ENCODE measurements at regions of chr11 and their contacts with region 1.

Region 1: GRCh38 chr11:42036201-42036600 is 576.7 kb upstream of the LRRC4C start:
- DNase-seq: no peak
- ATAC-seq: no peak
- H3K4me3 ChIP-seq: no peak overlapping the region
- H3K27ac ChIP-seq: no peak overlapping the region
- H3K4me1 ChIP-seq: no peaks in the 10 kb centered on the region
- H3K27me3 ChIP-seq: no peaks in the 10 kb centered on the region

Region 2: DNA sequence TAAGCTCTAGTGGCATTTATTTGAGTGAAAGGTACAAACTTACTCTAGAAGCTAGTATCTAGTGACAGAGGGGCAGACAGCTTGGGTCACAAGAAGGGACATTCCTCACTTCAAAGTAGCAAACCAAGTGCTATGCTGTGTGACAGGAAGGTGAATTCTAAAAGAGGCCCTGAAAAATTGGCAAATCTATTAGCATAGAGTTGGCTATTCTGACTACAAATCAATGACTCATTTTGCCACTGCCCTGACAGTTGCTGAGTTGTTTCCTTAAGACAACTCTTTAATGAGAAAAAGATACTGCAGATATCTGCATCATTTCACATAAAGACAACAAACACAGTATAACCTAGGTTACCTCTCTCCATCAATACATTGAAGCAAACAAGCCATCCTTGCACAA is 52.7 kb before region 1 on chr11:
- intact Hi-C with region 1: no loop called
- DNase-seq: no peak
- ATAC-seq: no peak
- H3K4me3 ChIP-seq: no peak overlapping the region
- H3K27ac ChIP-seq: no peak overlapping the region
- H3K4me1 ChIP-seq: no peaks in the 10 kb centered on the region
- H3K27me3 ChIP-seq: no peaks in the 10 kb centered on the region

Region 3: GRCh38 chr11:42098075-42098474 is 61.9 kb after region 1 on chr11:
- intact Hi-C with region 1: loop called in 1 of 2 experiments (anchors 10 kb)
- DNase-seq: no peak
- ATAC-seq: no peak
- H3K4me3 ChIP-seq: no peak overlapping the region
- H3K27ac ChIP-seq: no peak overlapping the region
- H3K4me1 ChIP-seq: no peaks in the 10 kb centered on the region
- H3K27me3 ChIP-seq: no peaks in the 10 kb centered on the region

Measured in aorta (tissue), 5 donors.